ENCODE measurements at regions of chr6 and their contacts with region 1.

Region 1: DNA sequence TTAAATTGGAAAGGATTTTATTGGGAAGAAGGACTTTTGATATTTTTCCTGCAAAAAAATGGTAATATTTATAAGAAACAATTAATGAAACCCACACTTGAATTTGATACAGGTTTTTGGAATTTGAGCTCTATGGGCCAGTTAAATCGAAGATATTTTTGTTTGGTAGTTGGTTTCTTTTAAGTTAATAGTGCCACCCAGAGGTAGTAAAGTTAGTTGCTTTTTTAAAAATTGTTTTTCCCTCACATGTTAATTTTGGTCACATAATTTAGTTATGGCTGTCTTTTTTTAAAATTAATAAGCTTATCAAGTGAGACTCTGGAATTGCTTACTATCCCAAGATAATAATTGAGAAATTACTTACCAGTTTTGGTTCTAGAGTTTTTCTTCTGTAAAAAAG is 7.1 kb downstream of the PRIM2 start:
- DNase-seq: peak in 3 of 4 experiments; percentile 4 to 18 (median 15)
- ATAC-seq: peak; percentile 52; the same call in 1 of the 3 replicates
- H3K4me3 ChIP-seq: no peak overlapping the region
- H3K27ac ChIP-seq: no peak overlapping the region
- H3K4me1 ChIP-seq: no peaks in the 10 kb centered on the region; a peak in 1 of 5 replicates
- H3K27me3 ChIP-seq: no peaks in the 10 kb centered on the region
- CTCF ChIP-seq: peak in 1 of 3 experiments; percentile 64; a peak in 2 of 6 replicates
- EP300 ChIP-seq: no peak
- POLR2A ChIP-seq: no peak
- RAD21 ChIP-seq: peak; percentile 35 to 58

Region 2: GRCh38 chr6:56417827-56418226 is 906.7 kb before region 1 on chr6:
- CTCF ChIA-PET with region 1: no interaction called
- POLR2A ChIA-PET with region 1: no interaction called
- in situ Hi-C with region 1: no loop called
- intact Hi-C with region 1: no loop called
- DNase-seq: no peak
- ATAC-seq: no peak
- H3K4me3 ChIP-seq: no peak overlapping the region
- H3K27ac ChIP-seq: no peak overlapping the region
- H3K4me1 ChIP-seq: no peaks in the 10 kb centered on the region
- H3K27me3 ChIP-seq: no peaks in the 10 kb centered on the region
- CTCF ChIP-seq: no peak
- EP300 ChIP-seq: no peak
- POLR2A ChIP-seq: no peak
- RAD21 ChIP-seq: peak in 1 of 2 experiments; percentile 35; a peak in 2 of 4 replicates

Region 3: GRCh38 chr6:56902641-56903464 is 421.7 kb before region 1 on chr6:
- CTCF ChIA-PET with region 1: interaction called, 34 read pairs
- POLR2A ChIA-PET with region 1: interaction called, 3 read pairs
- in situ Hi-C with region 1: loop called (anchors 5 kb)
- intact Hi-C with region 1: no loop called
- DNase-seq: peak; percentile 24 to 47 (median 35)
- ATAC-seq: peak; percentile 70
- H3K4me3 ChIP-seq: no peak overlapping the region
- H3K27ac ChIP-seq: no peak overlapping the region
- H3K4me1 ChIP-seq: peaks cover 0 to 4% of the 10 kb centered on the region in 2 experiments; a peak in 2 of 5 replicates
- H3K27me3 ChIP-seq: no peaks in the 10 kb centered on the region
- CTCF ChIP-seq: peak in 2 of 3 experiments; percentile 53 to 81; a peak in 4 of 6 replicates
- EP300 ChIP-seq: no peak
- POLR2A ChIP-seq: no peak
- RAD21 ChIP-seq: peak; percentile 56 to 73

Region 4: DNA sequence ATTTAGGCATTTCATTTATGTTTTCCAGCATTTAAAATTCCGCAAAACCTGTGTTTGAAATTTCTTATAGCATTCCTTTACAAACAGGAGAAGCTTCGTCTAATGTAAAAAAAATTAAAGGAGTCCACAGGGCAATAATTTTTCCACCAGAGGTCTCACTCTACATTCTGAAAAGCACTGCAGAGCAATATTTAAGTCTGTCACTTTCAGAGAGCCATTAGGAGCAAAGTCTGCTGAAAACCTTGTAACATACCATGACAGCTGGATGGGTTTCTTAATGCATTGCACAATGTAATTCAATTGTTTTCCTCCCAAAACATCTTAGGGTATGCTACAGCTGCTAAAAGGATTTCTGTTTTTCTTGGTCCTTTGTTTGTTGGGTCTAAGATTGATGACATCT is 134.4 kb before region 1 on chr6:
- CTCF ChIA-PET with region 1: interaction called, 18 read pairs
- POLR2A ChIA-PET with region 1: no interaction called
- in situ Hi-C with region 1: loop called (anchors 10 kb)
- intact Hi-C with region 1: no loop called
- DNase-seq: no peak
- ATAC-seq: peak; percentile 67
- H3K4me3 ChIP-seq: no peak overlapping the region
- H3K27ac ChIP-seq: no peak overlapping the region
- H3K4me1 ChIP-seq: no peaks in the 10 kb centered on the region
- H3K27me3 ChIP-seq: no peaks in the 10 kb centered on the region
- CTCF ChIP-seq: peak in 2 of 3 experiments; percentile 20 to 60; a peak in 3 of 6 replicates
- EP300 ChIP-seq: no peak
- POLR2A ChIP-seq: no peak
- RAD21 ChIP-seq: peak; percentile 65 to 71

Measured in K562 (cell line).